CD8-positive, alpha-beta T cell (primary cell): ENCODE measurements at regions of chr19 and their contacts with region 1.

Region 1: DNA sequence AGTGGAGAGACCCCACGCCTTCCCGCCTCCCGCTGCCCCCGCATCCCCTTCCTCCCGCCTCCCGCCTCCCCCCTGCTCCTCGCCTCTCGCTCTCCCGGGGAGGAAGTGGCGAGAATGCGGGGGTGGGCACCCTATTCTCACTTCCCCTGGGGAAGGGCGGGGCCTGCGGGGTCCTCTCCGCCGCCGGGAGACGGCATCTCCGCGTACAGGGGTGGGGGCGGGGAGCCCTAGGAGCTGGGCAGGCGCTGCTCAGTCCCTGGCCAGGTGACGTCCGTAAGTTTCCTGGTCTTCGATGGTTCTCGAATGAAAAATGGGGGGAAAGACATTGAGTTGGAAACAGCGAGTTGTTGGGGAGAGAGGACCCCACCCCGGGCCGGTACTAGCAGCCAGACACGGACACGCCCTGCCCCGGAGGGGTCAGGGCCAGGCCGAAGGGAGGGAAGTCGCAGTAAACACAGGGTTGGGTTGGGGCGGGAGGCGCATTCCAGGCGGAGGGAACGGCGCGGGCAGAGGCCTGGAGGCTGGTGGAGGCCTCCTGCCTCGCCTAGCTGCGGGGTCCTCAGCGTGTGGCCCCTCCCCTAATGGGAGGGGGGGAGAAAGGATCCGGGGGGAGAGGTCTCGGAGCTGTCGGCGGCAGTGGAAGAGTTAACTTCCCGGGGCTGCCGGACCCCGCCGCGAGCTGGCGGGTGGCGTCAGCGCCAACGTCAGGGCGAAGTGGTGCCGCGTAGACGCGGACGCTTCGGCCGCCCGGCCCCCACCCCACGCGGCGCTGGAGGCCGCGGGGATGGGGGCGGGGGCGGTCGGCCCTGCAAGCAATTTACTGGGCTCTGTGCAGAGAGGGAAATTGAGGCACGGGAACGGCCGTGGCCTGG is 10.4 kb upstream of the JUND start:
- DNase-seq: peak; percentile 66 to 93 (median 82)
- ATAC-seq: peak; percentile 45
- H3K4me3 ChIP-seq: peak overlapping the region; percentile 71 to 91
- H3K4me3 Mint-ChIP-seq: peak overlapping the region; percentile 86
- H3K27ac ChIP-seq: peak overlapping the region; percentile 93 to 100
- H3K27ac Mint-ChIP-seq: peak overlapping the region; percentile 95
- H3K4me1 ChIP-seq: peaks cover 54% of the 10 kb centered on the region
- H3K4me1 Mint-ChIP-seq: peaks cover 55% of the 10 kb centered on the region
- H3K27me3 ChIP-seq: no peaks in the 10 kb centered on the region
- H3K27me3 Mint-ChIP-seq: no peaks in the 10 kb centered on the region
- CTCF ChIP-seq: no peak

Region 2: GRCh38 chr19:18304458-18305310 is 12.9 kb after region 1 on chr19:
- CTCF ChIA-PET with region 1: interaction called, 4 read pairs
- POLR2A ChIA-PET with region 1: interaction called, 34 read pairs
- intact Hi-C with region 1: loop called (anchors 1 kb)
- DNase-seq: peak; percentile 69 to 93 (median 89)
- ATAC-seq: peak; percentile 77
- H3K4me3 ChIP-seq: peak overlapping the region; percentile 58 to 63
- H3K4me3 Mint-ChIP-seq: peak overlapping the region; percentile 97
- H3K27ac ChIP-seq: peak overlapping the region; percentile 91 to 94
- H3K27ac Mint-ChIP-seq: peak overlapping the region; percentile 100
- H3K4me1 ChIP-seq: peaks cover 64% of the 10 kb centered on the region
- H3K4me1 Mint-ChIP-seq: peaks cover 45% of the 10 kb centered on the region
- H3K27me3 ChIP-seq: no peaks in the 10 kb centered on the region
- H3K27me3 Mint-ChIP-seq: no peaks in the 10 kb centered on the region
- CTCF ChIP-seq: no peak